Heart left ventricle (tissue), 16 donors: ENCODE measurements at regions of chr11 and their contacts with region 1.

Region 1: DNA sequence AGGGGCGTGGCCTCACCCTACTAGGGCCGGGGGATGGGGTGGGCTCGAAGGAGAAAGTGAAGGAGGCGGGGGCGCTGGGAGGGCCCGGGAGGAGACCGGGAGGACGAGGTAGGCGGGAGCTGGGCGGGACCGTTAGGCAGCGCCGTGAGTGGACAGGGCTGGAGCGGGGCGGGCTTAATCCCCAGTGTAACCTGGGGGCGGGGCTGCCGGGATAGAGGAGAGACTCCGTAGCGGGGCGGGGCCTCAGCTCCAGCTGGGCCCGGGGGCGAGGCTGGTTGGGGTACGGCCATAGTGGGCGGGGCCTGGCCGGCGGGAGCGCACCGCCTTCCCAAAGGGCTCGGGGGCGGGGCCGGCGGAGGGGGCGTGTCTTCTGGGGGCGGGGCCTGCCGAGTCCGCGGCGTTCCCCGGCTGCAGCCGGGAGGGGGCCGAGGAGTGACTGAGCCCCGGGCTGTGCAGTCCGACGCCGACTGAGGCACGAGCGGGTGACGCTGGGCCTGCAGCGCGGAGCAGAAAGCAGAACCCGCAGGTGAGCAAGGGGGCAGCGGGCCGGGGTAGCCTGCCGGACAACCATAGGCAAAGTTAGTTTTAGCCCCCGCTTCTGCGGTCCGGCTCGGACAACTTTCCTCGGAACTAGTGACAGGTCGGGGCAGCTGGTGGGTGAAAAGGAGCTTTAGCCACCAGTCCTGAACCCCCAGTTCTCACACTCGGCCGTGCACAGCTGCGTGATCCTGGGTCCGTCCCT is at the start of gene CD82:
- DNase-seq: peak; percentile 100
- ATAC-seq: peak; percentile 96 to 97 (median 96)
- H3K4me3 ChIP-seq: peak within 1 kb of the TSS; percentile 28 to 74 (median 60)
- H3K27ac ChIP-seq: peak within 1 kb of the TSS; percentile 90 to 99 (median 96)
- H3K4me1 ChIP-seq: peaks cover 20 to 67% (median 45%) of the 10 kb centered on the region in 12 donors
- H3K27me3 ChIP-seq: no peaks in the 10 kb centered on the region
- CTCF ChIP-seq: peak in 9 of 12 donors; percentile 8 to 54 (median 40)
- POLR2A ChIP-seq: peak in 1 of 2 donors; percentile 84
- total RNA-seq, gene CD82: 20.1 to 76.2 (median 37.3) TPM

Region 2: GRCh38 chr11:44589301-44589700 is 23.9 kb after region 1 on chr11:
- intact Hi-C with region 1: loop called in 2 of 10 experiments (anchors 1 to 2 kb)
- DNase-seq: no peak
- ATAC-seq: no peak
- H3K4me3 ChIP-seq: no peak overlapping the region
- H3K27ac ChIP-seq: peak overlapping the region in 1 of 12 donors; percentile 58
- H3K4me1 ChIP-seq: peaks cover 0 to 42% (median 23%) of the 10 kb centered on the region in 12 donors
- H3K27me3 ChIP-seq: no peaks in the 10 kb centered on the region
- CTCF ChIP-seq: no peak
- POLR2A ChIP-seq: no peak

Region 3: DNA sequence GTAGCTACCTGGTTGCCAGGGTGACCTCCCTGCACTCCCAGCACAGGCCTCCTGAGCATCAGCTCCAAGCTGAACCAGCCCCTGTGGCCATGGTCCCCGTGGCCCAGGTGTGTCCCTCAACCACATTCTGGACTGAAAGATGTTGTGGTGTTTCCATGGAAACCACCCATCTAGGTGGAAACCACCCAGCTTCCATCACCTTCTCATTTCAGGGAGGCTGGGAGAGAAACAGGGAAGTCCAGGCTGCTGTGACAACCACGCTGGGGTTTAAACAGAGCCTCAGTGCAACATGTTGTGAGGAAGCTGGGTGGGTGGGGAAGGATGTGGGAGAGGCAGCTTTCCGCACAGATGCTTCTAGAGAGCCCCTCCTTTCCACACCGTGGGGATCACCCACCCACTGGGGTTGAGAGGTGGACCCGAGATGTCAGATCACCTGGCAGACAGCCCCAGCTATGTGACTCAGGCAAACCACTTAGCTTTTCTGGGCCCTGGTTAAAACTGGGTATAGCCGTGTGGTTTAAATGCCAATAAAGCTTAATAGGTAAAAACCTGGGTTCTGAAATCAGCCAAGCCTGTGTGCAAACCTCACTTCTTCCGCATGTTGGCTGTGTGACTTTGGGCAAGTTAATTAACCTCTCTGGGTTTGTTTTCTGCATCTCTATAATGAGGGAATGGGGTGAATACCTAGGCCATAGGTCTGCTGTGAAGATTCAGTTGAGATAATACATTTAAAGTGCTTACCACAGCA is 46.5 kb after region 1 on chr11:
- intact Hi-C with region 1: loop called in 2 of 10 experiments (anchors 2 kb)
- DNase-seq: peak in 2 of 5 donors; percentile 40 to 46
- ATAC-seq: peak in 3 of 4 donors; percentile 33 to 65 (median 38)
- H3K4me3 ChIP-seq: no peak overlapping the region
- H3K27ac ChIP-seq: peak overlapping the region in 10 of 12 donors; percentile 12 to 71 (median 37)
- H3K4me1 ChIP-seq: peaks cover 0 to 64% (median 32%) of the 10 kb centered on the region in 12 donors
- H3K27me3 ChIP-seq: no peaks in the 10 kb centered on the region
- CTCF ChIP-seq: no peak
- POLR2A ChIP-seq: no peak

Region 4: GRCh38 chr11:44905131-44905866 is 339.9 kb after region 1 on chr11:
- intact Hi-C with region 1: loop called in 3 of 10 experiments (anchors 5 kb)
- DNase-seq: no peak
- ATAC-seq: no peak
- H3K4me3 ChIP-seq: no peak overlapping the region
- H3K27ac ChIP-seq: no peak overlapping the region
- H3K4me1 ChIP-seq: peaks cover 0 to 26% (median 3%) of the 10 kb centered on the region in 12 donors
- H3K27me3 ChIP-seq: no peaks in the 10 kb centered on the region
- CTCF ChIP-seq: no peak
- POLR2A ChIP-seq: no peak

Region 5: GRCh38 chr11:44916801-44917385 is 351.5 kb after region 1 on chr11:
- intact Hi-C with region 1: loop called in 3 of 10 experiments (anchors 5 kb)
- DNase-seq: no peak
- ATAC-seq: peak; percentile 75 to 80 (median 78)
- H3K4me3 ChIP-seq: no peak overlapping the region
- H3K27ac ChIP-seq: peak overlapping the region in 9 of 12 donors; percentile 29 to 75 (median 66)
- H3K4me1 ChIP-seq: peaks cover 0 to 33% (median 17%) of the 10 kb centered on the region in 12 donors
- H3K27me3 ChIP-seq: no peaks in the 10 kb centered on the region
- CTCF ChIP-seq: no peak
- POLR2A ChIP-seq: no peak

Region 6: DNA sequence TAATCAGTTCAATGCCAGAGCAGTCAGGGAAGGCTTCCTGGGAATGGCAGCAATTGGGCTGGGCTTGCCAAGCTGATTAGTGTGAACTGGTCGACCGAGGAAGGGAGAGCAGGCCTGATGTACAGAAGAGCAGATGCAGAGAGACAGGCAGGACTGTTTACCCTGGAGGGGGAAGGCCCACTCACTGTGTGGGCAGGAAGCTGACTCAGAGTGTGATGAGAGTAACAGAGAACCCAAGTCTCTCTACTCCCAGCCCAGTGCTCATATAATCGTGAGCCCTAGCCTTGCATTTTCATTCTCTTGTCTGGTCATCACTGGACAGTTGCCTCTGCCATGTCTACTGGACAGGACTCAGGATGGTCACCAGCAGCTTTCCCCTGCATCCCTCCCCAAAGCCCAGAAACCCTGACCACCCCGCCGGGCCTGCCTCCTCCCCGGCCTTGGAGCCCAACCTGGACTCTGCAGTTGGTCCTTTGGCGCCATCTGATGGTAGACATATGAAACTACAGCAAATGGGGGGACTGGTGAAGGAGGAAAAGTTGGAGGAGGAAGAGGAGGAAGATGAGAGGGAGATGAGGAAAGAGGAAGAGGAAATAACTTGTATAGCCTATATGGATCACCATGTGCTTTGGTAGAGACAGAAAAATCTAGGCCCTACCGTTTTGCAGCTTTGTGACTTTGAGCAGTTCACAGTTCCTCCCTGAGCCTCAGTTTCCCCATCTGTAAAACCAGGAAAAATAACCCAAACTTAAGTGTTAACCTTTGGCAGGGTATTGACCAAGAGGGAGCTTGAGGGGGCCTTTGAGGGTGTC is 537.6 kb after region 1 on chr11:
- intact Hi-C with region 1: loop called in 3 of 10 experiments (anchors 10 kb)
- DNase-seq: peak; percentile 58 to 81 (median 62)
- ATAC-seq: peak in 3 of 4 donors; percentile 62 to 81 (median 67)
- H3K4me3 ChIP-seq: no peak overlapping the region
- H3K27ac ChIP-seq: peak overlapping the region in 1 of 12 donors; percentile 66
- H3K4me1 ChIP-seq: peaks cover 0 to 25% (median 10%) of the 10 kb centered on the region in 12 donors
- H3K27me3 ChIP-seq: peaks cover 0 to 9% (median 0%) of the 10 kb centered on the region in 9 donors
- CTCF ChIP-seq: peak; percentile 85 to 99 (median 96)
- POLR2A ChIP-seq: no peak